Sigmoid colon (tissue), 7 donors: ENCODE measurements at regions of chr17 and their contacts with region 1.

Region 1: DNA sequence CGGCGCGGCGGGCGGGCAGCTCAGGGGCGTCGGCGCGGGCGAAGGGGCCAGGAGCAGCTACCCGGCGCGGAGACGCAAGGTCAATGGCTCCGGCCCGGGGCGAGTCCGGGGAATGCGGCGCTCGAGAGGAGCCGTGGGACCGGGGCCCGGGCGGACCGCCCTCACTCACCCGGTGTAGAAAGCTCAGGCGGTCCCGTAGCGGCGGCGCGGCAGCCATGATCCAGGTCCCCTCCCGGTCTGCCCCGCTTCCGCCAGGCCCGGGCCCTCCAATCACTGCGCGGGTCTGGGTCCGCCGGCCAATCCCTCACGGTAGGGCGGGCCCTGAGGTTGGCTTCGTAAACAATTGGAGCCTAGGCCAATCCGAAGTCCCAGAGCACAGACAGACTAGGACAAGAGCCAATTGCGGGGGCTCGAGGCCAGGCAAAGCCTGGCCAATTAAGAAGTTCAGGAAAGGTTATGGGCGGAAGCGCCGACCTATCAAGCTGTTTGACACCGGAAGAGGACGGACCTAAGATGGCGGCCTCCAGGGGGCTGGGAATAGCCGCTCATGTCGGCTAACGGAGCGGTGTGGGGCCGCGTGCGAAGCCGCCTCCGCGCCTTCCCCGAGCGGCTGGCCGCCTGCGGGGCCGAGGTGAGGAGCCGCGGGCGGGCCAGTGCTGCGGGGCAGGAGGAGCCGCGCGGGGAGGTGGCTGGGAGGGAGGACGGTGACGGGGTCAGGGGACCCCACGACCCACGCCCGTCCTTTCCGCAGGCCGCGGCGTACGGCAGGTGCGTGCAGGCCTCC is at the starts of genes NDUFAF8 and TEPSIN:
- DNase-seq: peak; percentile 99
- H3K4me3 ChIP-seq: peak within 1 kb of the TSS; percentile 76 to 93 (median 90)
- H3K27ac ChIP-seq: peak within 1 kb of the TSS; percentile 87 to 92 (median 88)
- H3K4me1 ChIP-seq: peaks cover 0 to 45% (median 36%) of the 10 kb centered on the region in 4 donors
- H3K27me3 ChIP-seq: no peaks in the 10 kb centered on the region
- CTCF ChIP-seq: peak in 1 of 4 experiments; percentile 8
- EP300 ChIP-seq: no peak
- POLR2A ChIP-seq: peak; percentile 6 to 19
- total RNA-seq, gene NDUFAF8: 8.6 to 52.4 (median 35.0) TPM
- total RNA-seq, gene TEPSIN: 15.7 to 42.8 (median 24.4) TPM

Region 2: GRCh38 chr17:80981062-80981902 is 257.7 kb before region 1 on chr17:
- intact Hi-C with region 1: loop called (anchors 5 kb)
- DNase-seq: no peak
- H3K4me3 ChIP-seq: peak overlapping the region in 3 of 4 donors; percentile 18 to 45 (median 45)
- H3K27ac ChIP-seq: peak overlapping the region in 3 of 4 donors; percentile 4 to 43 (median 37)
- H3K4me1 ChIP-seq: peaks cover 4 to 33% (median 28%) of the 10 kb centered on the region in 4 donors
- H3K27me3 ChIP-seq: no peaks in the 10 kb centered on the region
- CTCF ChIP-seq: peak; percentile 12 to 96 (median 64)
- EP300 ChIP-seq: no peak
- POLR2A ChIP-seq: no peak

Region 3: DNA sequence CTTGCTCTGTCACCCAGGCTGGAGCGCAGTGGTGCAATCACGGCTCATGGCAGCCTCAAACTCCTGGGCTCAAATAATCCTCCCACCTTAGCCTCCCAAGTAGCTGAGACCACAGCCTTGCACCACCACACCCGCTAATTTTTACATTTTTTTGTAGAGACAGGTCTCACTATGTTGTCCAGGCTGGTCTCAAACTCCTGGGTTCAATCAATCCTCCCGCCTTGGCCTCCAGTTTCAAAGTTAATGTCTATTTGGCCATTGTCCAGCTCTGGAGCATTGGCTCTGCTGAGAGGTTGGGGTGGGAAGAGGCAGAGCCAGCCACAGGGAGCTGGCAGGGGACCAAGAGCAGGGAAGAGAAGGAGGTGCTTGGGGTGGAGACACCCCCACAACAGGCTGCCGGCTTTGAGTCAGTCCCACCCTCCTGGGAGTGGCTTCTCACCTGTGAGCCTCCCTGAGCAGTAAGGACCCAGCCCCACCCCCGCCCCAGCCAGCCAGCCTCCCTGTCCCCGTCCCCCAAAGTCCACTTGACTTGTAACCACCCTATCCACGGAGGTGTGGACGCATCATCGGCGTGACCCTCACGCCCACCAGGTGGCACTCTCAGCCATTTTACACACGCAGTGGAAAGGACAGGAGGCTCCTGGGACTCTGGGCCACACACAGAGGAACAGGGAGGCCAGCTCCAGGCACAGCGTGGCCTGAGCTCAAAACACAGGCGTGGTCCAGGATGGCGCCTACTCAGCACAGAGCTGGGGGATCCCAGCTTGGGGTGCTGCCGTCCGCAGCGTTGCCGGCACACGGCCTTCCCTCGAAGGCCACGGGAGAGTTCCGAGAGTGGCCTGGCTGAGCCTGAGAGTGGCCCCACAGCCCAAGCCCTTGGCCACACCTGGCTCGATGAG is 96.5 kb before region 1 on chr17:
- intact Hi-C with region 1: loop called (anchors 1 kb)
- DNase-seq: peak; percentile 85
- H3K4me3 ChIP-seq: no peak overlapping the region
- H3K27ac ChIP-seq: no peak overlapping the region
- H3K4me1 ChIP-seq: peaks cover 0 to 9% (median 9%) of the 10 kb centered on the region in 4 donors
- H3K27me3 ChIP-seq: no peaks in the 10 kb centered on the region
- CTCF ChIP-seq: peak; percentile 12 to 63 (median 32)
- EP300 ChIP-seq: no peak
- POLR2A ChIP-seq: no peak

Region 4: GRCh38 chr17:81165246-81166032 is 73.6 kb before region 1 on chr17 and contains the start of gene PVALEF:
- intact Hi-C with region 1: no loop called
- DNase-seq: peak; percentile 62
- H3K4me3 ChIP-seq: peak within 1 kb of the TSS; percentile 21 to 46 (median 39)
- H3K27ac ChIP-seq: peak within 1 kb of the TSS in 3 of 4 donors; percentile 4 to 73 (median 23)
- H3K4me1 ChIP-seq: peaks cover 0 to 10% (median 9%) of the 10 kb centered on the region in 4 donors
- H3K27me3 ChIP-seq: peaks cover 5 to 35% (median 20%) of the 10 kb centered on the region in 3 donors
- CTCF ChIP-seq: no peak
- EP300 ChIP-seq: no peak
- POLR2A ChIP-seq: no peak
- total RNA-seq, gene PVALEF: not detected

Region 5: DNA sequence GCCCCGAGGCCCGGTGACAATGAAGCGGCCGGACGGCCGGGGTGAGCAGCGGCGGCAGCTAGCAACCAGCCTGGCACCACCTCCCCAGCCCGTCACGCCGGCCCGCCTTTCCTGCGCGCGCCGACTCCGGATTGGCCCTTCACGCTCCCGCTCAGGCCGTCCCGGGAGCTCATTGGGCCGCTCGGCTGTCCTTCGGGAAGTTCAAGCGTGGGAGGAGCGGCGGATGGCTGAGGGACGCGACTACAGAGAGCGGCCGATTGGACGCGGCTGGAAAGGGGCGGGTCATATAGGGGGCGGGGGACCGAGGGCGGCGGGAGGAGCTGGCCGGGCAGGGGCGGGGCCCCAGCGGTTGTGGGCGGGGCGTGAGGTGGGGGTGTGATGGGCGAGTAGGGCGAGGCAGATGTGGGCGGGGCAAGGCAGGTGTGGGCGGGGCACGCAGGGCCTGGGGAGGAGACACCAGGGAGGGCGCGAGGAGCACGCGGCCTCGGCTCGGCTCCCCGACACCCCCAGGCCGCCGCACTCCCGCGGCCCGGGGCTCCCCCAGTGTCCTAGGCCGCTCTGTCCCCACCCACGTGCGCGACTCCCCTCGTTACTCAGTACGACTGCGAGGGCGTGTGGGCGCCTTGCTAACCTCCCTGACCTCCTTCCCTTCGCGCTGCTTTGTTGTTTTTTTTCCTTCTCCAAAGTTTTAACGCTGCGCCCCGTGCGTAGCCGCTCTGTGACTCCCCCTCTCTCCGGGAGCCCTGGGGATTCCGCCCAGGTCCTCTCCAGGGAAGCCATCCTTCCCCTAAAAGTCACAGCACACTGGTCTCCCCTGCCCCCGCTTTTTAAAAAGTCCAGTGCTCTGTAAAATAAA is 15.9 kb before region 1 on chr17 and contains the start of gene CEP131:
- intact Hi-C with region 1: loop called (anchors 1 kb)
- DNase-seq: peak; percentile 99
- H3K4me3 ChIP-seq: peak within 1 kb of the TSS; percentile 53 to 87 (median 80)
- H3K27ac ChIP-seq: peak within 1 kb of the TSS; percentile 50 to 70 (median 62)
- H3K4me1 ChIP-seq: peaks cover 0 to 25% (median 18%) of the 10 kb centered on the region in 4 donors
- H3K27me3 ChIP-seq: no peaks in the 10 kb centered on the region
- CTCF ChIP-seq: no peak
- EP300 ChIP-seq: no peak
- POLR2A ChIP-seq: no peak
- total RNA-seq, gene CEP131: 4.1 to 11.6 (median 5.1) TPM

Region 6: DNA sequence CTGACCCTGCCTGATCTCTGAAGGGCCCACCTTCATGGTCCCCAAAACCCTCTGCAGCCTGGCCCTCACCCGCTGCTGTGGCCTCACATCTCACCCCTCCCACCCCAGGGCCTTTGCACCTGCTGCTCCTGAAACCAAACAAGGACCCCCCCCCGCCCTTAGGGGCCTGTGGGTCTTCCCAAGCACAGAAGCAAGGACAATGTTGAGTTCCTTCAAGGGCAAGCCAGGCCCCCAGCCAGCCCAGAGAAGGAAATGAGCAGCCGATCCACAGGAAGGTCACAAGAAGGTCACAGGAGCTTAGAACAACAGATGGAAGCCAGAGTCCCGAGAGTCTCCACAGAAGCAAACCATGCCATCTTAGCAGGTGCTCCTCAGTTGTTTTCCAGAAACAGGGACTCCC is 417.8 kb after region 1 on chr17:
- intact Hi-C with region 1: no loop called
- DNase-seq: no peak
- H3K4me3 ChIP-seq: no peak overlapping the region
- H3K27ac ChIP-seq: no peak overlapping the region
- H3K4me1 ChIP-seq: no peaks in the 10 kb centered on the region
- H3K27me3 ChIP-seq: peaks cover 5 to 31% (median 5%) of the 10 kb centered on the region in 3 donors
- CTCF ChIP-seq: no peak
- EP300 ChIP-seq: no peak
- POLR2A ChIP-seq: no peak